HCT116 (cell line): ENCODE measurements at regions of chr2 and their contacts with region 1.

Region 1: DNA sequence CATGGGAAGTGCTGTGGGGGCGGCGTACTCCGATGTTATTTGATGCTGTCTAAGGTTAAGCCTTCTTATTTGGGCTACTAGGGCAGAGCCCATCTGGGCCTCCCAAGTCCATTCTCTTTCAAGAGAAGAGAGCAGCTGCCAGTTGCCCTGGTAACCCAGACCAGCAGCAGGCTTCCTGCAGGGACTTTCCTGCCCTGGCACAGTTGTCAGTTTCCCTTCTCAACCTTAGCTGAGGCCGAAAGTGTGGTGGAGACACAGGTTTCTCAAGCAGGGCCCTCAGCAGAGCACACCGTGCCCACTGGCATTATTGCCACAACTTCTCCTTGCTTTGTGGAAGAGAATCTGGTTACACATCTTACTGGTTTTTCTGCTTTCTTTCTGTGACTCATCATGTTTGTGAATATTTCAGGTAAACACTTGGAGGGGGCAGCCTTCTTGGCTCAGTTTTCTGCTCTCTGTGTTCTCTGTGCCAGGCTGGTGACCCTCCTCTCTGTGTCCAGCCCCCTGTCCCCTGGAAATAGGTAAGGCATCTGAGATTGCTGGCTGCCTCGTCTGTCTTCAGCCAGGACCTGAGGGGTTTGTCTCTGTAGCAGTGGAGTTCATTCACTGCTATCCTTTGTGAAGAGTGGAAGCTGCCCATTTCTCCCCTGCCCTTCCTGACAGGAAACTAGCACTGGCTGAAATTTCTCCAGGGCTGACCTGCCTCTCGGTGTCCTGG is 111.0 kb downstream of the B3GNT2 start:
- DNase-seq: peak; percentile 48
- ATAC-seq: peak; percentile 4; the same call in 1 of the 2 replicates
- H3K4me3 ChIP-seq: peak overlapping the region; percentile 2 to 44; a peak in 2 of 4 replicates
- H3K27ac ChIP-seq: peak overlapping the region; percentile 97
- H3K4me1 ChIP-seq: peaks cover 54 to 66% of the 10 kb centered on the region in 2 experiments
- H3K27me3 ChIP-seq: no peaks in the 10 kb centered on the region
- CTCF ChIP-seq: no peak
- POLR2A ChIP-seq: no peak
- RAD21 ChIP-seq: no peak

Region 2: DNA sequence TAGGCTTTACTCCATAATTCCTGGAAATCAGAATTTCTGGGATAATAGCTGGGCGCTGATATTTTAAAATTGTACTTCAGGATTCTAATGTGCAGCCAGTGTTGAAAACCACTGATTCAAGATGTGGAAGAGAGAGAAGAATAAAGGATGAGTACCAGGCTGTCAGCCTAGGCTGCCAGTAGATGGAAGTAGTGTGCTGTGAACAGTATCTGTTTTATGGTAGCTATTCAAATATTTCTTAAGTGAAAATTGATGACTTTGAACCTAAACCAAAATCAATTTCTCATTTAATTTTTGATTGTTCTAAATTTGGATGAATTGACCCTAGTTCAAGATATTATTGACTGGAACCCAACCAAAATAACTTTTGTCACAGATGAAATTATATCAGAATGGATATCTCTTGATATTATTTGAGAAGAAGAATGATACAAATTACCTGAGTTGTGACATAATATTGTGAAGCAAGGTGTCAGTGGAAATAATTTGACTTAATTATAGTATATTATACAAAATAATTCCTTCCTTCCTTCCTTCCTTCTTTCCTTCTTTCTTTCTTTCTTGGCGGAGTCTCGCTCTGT is 313.4 kb before region 1 on chr2:
- CTCF ChIA-PET with region 1: interaction called, 4 read pairs
- POLR2A ChIA-PET with region 1: no interaction called
- RAD21 ChIA-PET with region 1: no interaction called
- intact Hi-C with region 1: loop called (anchors 10 kb)
- DNase-seq: peak; percentile 38
- ATAC-seq: peak; percentile 78
- H3K4me3 ChIP-seq: no peak overlapping the region
- H3K27ac ChIP-seq: no peak overlapping the region
- H3K4me1 ChIP-seq: peaks cover 4 to 5% of the 10 kb centered on the region in 2 experiments
- H3K27me3 ChIP-seq: no peaks in the 10 kb centered on the region
- CTCF ChIP-seq: peak; percentile 64 to 73 (median 66); a peak in 5 of 6 replicates
- POLR2A ChIP-seq: no peak
- RAD21 ChIP-seq: peak; percentile 90

Region 3: GRCh38 chr2:62334440-62335058 is 27.6 kb after region 1 on chr2:
- CTCF ChIA-PET with region 1: no interaction called
- POLR2A ChIA-PET with region 1: no interaction called
- RAD21 ChIA-PET with region 1: no interaction called
- intact Hi-C with region 1: no loop called
- DNase-seq: no peak
- ATAC-seq: no peak
- H3K4me3 ChIP-seq: no peak overlapping the region
- H3K27ac ChIP-seq: no peak overlapping the region
- H3K4me1 ChIP-seq: no peaks in the 10 kb centered on the region
- H3K27me3 ChIP-seq: no peaks in the 10 kb centered on the region
- CTCF ChIP-seq: no peak
- POLR2A ChIP-seq: no peak
- RAD21 ChIP-seq: no peak